HEK293 (cell line): ENCODE measurements at regions of chr12 and their contacts with region 1.

Region 1: DNA sequence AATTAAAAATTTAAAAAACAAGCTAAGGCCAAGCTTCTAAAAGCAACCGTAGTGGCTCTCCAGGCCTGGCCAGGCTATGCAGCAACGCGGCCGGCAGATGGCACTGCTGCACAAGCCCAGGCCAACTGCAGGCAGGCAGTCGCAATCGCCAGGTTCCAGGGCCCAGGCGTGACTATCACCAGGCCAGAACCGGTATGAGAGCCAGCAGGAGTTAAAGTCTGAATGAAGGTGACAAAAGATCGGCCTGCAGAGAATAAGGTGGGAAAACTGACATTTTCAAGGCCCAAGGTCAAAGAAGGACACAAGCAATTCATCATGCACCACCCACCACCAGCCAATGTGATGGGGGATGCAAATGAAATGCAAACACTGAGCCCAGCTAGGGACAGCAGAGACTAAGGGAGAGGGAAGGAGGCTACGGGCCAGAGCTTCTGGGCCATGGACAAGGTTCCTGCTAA is 43.6 kb upstream of the ANO2 start:
- H3K4me3 ChIP-seq: no peak overlapping the region
- H3K27ac ChIP-seq: no peak overlapping the region
- H3K4me1 ChIP-seq: no peaks in the 10 kb centered on the region
- CTCF ChIP-seq: peak; percentile 91

Region 2: GRCh38 chr12:5846950-5847349 is 141.7 kb before region 1 on chr12:
- CTCF ChIA-PET with region 1: no interaction called
- POLR2A ChIA-PET with region 1: no interaction called
- H3K4me3 ChIP-seq: no peak overlapping the region
- H3K27ac ChIP-seq: no peak overlapping the region
- H3K4me1 ChIP-seq: no peaks in the 10 kb centered on the region
- CTCF ChIP-seq: no peak

Region 3: DNA sequence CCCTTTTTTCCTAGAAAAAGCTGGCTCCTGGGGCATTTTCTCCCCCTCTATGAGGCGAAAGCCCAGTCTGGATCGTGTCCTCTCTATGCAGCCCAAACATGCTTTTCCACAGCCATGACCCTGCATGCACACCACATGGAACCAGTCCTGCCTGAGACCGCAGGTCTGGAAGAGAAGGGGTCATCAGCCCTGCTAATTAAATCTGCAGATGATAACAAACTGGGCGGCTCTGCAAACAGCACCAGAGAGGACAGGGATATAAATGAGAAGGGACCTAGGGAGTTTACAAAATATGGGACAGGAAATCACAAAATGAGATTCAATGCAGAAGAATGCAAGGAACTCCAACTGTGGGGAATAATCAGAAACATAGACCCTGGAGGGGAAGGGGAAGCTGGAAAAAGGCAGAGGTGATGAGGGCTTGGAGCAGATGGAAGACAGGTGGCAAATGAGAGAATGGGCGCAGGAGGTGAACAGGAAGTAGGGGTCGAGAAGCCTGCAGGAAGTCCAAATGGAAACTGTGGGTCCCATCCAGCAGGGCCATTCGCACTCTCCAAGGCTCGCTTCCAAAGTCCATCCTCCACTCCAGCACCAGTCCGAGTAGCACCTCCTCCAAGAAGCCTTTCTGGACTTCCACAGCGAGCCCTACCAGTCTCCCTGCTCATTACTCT is 119.9 kb before region 1 on chr12:
- CTCF ChIA-PET with region 1: no interaction called
- POLR2A ChIA-PET with region 1: no interaction called
- H3K4me3 ChIP-seq: no peak overlapping the region
- H3K27ac ChIP-seq: no peak overlapping the region
- H3K4me1 ChIP-seq: no peaks in the 10 kb centered on the region
- CTCF ChIP-seq: no peak

Region 4: GRCh38 chr12:5898876-5899275 is 89.8 kb before region 1 on chr12:
- CTCF ChIA-PET with region 1: no interaction called
- POLR2A ChIA-PET with region 1: no interaction called
- H3K4me3 ChIP-seq: no peak overlapping the region
- H3K27ac ChIP-seq: no peak overlapping the region
- H3K4me1 ChIP-seq: no peaks in the 10 kb centered on the region
- CTCF ChIP-seq: no peak

Region 5: DNA sequence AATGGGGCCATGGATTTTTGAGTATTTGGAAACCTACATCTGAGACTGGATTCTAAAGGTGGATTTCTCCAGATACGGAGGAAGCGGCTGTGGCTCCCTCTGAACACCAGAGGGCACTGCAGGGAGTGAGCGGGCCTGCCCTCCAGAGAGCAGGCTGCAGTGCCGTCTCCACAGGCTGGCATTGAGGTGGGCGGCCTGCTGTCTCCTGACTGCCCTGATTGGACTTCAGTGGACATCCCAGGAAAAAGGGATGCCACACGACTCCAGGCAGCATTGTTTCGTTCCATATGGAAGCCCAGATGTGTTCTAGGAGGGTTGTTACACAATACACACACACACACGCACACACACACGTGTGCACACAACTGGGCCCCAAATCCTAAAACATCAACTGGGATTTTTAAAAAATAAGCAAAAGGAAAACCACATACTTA is 22.7 kb before region 1 on chr12:
- CTCF ChIA-PET with region 1: interaction called, 13 read pairs
- POLR2A ChIA-PET with region 1: no interaction called
- H3K4me3 ChIP-seq: no peak overlapping the region
- H3K27ac ChIP-seq: no peak overlapping the region
- H3K4me1 ChIP-seq: no peaks in the 10 kb centered on the region
- CTCF ChIP-seq: peak; percentile 64; the same call in 1 of the 2 replicates

Region 6: DNA sequence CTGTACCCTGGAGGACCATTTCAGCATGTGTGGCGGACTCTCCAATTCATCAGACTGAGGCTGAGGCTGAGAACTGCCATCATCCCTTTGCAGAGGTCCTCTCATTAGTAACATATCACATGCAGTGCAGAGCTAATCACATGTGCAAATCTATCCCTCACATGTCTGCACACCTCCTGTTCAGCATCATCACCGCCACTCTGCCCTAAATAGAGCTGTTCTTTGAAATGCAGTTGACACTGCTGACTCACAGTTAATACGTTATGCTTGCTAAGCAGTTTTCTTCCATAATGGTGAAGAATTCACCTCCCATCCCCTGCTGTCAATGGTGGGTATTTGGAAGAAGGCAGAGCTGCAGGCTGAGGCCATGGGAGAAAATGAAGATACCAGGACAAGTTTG is 41.4 kb after region 1 on chr12:
- CTCF ChIA-PET with region 1: interaction called, 349 read pairs
- POLR2A ChIA-PET with region 1: no interaction called
- H3K4me3 ChIP-seq: no peak overlapping the region
- H3K27ac ChIP-seq: no peak overlapping the region
- H3K4me1 ChIP-seq: no peaks in the 10 kb centered on the region
- CTCF ChIP-seq: no peak

Region 7: GRCh38 chr12:6056406-6057240 is 67.9 kb after region 1 on chr12:
- CTCF ChIA-PET with region 1: interaction called, 15 read pairs
- POLR2A ChIA-PET with region 1: no interaction called
- H3K4me3 ChIP-seq: no peak overlapping the region
- H3K27ac ChIP-seq: no peak overlapping the region
- H3K4me1 ChIP-seq: no peaks in the 10 kb centered on the region
- CTCF ChIP-seq: no peak

Region 8: DNA sequence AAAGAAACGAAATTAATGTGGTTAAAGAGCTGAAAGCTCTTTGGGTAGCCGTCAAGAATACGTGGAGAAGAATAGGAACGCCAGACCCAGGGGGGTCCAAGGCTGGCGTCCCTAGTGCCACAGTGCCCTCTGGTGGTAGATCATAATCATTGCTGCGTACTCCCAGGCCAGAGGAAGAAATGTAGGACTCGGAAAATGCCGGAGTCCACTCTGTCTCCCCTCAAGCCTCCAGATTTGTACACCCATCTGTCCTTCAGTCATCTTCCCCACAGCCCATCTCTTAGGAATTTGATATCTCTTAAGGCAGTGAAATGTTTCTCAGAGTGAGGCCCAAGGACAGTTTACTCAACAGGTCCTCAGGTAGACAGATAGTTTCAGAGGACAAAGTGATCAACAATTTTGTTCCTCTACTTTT is 296.4 kb after region 1 on chr12:
- CTCF ChIA-PET with region 1: interaction called, 82 read pairs
- POLR2A ChIA-PET with region 1: no interaction called
- H3K4me3 ChIP-seq: no peak overlapping the region
- H3K27ac ChIP-seq: no peak overlapping the region
- H3K4me1 ChIP-seq: no peaks in the 10 kb centered on the region
- CTCF ChIP-seq: peak; percentile 84